PC-3 (cell line): ENCODE measurements at regions of chr4 and their contacts with region 1.

Region 1: DNA sequence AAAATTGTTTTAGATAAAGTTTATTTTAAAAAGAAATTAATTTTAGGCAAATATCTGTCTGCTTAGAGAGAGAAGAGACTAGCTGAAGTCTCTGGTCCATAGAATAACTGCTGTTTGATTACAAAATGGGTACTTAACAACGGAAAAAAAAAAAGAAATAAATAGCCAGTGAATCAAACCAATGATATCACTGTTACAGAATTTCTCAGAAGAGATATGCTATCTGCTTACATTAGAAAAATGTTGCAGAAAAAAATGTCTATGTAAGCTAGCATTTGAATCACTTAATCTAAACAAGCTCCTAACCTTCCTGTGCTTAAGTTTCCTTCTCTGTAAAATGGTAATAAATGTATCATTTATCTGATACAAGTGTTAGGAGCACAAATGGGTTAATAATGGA is 189.9 kb downstream of the IL15 start:
- DNase-seq: no peak
- ATAC-seq: no peak
- H3K4me3 ChIP-seq: no peak overlapping the region
- H3K27ac ChIP-seq: no peak overlapping the region
- H3K4me1 ChIP-seq: no peaks in the 10 kb centered on the region
- H3K27me3 ChIP-seq: no peaks in the 10 kb centered on the region
- CTCF ChIP-seq: no peak

Region 2: DNA sequence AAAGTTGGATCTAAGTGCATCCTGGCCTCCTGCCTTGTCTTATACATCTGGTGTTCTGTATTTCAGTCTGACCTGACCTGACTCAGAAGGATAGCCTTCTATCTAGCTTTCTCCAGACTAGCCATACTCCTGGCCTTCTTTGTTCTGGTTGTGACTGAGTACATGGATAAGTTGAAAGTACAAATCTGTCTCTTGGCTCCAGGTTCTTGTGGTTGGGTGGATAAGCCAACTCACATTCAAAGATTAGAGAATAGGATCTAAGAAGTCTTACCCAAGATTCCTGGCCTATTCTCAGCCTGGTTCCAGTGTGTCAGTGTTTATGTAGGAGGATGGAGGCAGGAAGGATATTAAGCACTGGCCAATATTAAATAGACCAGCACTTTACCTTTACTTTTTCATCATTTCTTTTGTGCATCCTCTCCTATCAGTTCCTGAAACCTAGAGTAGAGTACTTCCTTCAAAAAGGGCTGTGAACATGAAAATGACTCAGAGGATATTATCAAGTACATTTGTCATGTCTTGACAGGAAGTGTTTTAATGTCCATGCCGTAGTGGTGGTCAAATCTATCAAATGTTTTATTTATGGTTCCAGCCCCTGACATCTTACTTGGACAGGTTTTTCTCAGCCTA is 66.3 kb before region 1 on chr4:
- CTCF ChIA-PET with region 1: no interaction called
- POLR2A ChIA-PET with region 1: no interaction called
- intact Hi-C with region 1: no loop called
- DNase-seq: peak; percentile 43
- ATAC-seq: peak; percentile 33; the same call in 1 of the 2 replicates
- H3K4me3 ChIP-seq: no peak overlapping the region
- H3K27ac ChIP-seq: no peak overlapping the region
- H3K4me1 ChIP-seq: no peaks in the 10 kb centered on the region
- H3K27me3 ChIP-seq: no peaks in the 10 kb centered on the region
- CTCF ChIP-seq: no peak

Region 3: GRCh38 chr4:141812158-141812557 is 14.1 kb before region 1 on chr4:
- CTCF ChIA-PET with region 1: no interaction called
- POLR2A ChIA-PET with region 1: no interaction called
- intact Hi-C with region 1: loop called (anchors 2 kb)
- DNase-seq: no peak
- ATAC-seq: no peak; the same call in 1 of the 2 replicates
- H3K4me3 ChIP-seq: no peak overlapping the region
- H3K27ac ChIP-seq: no peak overlapping the region
- H3K4me1 ChIP-seq: peaks cover 8% of the 10 kb centered on the region
- H3K27me3 ChIP-seq: no peaks in the 10 kb centered on the region
- CTCF ChIP-seq: no peak

Region 4: DNA sequence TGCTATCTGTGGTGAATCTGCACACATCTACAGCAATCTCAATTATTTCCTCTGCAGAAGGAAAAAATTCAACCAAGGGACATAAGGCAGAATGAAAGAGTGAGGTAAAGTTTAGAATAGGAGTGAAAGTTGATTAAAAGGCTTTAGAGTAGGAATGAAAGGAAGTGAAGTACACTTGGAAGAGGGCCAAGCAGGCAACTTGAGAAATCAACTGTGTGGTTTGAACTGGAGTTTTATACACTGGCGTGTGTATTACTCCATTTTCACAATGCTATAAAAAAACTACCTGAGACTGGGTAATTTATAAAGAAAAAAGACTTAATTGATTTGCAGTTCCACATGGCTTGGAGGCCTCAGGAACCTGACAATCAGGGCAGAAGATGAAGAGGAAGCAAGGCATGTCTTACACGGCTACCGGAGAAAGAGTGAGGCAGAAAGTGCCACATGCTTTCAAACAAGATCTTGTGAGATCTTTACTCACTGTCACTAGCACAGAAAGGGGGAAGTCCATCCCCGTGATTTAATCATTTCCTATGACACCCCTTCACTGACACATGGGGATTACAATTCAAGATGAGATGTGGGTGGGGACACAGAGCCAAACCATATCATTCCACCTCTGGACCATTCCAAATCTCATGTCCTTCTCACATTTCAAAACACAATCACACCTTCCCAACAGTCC is 45.0 kb after region 1 on chr4:
- CTCF ChIA-PET with region 1: no interaction called
- POLR2A ChIA-PET with region 1: no interaction called
- intact Hi-C with region 1: no loop called
- DNase-seq: no peak
- ATAC-seq: no peak
- H3K4me3 ChIP-seq: no peak overlapping the region
- H3K27ac ChIP-seq: no peak overlapping the region
- H3K4me1 ChIP-seq: no peaks in the 10 kb centered on the region
- H3K27me3 ChIP-seq: no peaks in the 10 kb centered on the region
- CTCF ChIP-seq: no peak